ENCODE measurements at regions of chr17 and their contacts with region 1.

Region 1: DNA sequence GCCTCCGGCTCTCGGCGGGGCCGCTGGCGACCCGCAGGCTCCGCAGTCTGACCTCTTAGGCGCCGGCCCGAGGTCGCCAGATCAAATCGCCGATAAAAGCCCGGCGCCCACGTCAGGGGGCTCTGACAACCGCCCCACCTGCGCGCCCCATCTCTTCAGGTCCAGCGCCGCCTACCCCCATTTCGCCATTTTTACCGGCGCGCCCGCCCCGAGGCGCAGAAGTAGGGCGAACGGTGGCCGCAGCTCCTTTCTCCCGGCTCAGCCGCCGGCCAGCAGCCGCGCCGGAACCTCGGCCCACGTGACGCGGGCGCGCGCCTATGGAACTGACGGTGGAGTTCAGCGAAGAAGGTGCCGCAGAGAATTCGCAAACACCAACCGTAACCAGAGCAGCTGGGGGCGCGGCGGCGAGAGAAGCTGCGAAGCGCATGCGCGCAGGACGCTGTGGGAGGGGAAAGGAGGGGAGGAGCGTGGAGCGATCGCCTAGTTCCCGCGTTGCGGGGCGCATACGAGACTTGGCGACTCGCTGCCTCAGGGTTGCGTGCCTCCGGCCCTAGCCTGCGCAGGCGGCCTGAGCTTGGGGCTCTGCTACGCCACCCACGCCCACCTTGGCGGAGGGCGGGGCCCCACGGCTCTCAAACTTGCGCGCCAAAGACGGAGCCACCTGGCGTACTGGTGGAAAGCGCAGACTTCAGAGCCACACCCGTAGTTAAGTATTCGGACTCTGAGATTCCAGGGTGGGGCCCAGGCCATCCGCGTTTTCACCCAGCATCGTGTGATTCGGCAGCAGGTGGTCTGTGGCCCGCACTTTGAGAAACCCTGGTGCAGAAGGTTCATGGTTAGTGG is at the start of gene TRIM37:
- DNase-seq: peak; percentile 96 to 100 (median 99)
- ATAC-seq: peak; percentile 98
- H3K4me3 ChIP-seq: peak within 1 kb of the TSS; percentile 69
- H3K4me3 Mint-ChIP-seq: peak within 1 kb of the TSS; percentile 80 to 97 (median 94)
- H3K27ac ChIP-seq: peak within 1 kb of the TSS; percentile 83
- H3K27ac Mint-ChIP-seq: peak within 1 kb of the TSS; percentile 63 to 98 (median 90)
- H3K4me1 ChIP-seq: peaks cover 11 to 26% of the 10 kb centered on the region in 2 donors
- H3K4me1 Mint-ChIP-seq: peaks cover 15 to 57% (median 39%) of the 10 kb centered on the region in 7 donors
- H3K27me3 ChIP-seq: no peaks in the 10 kb centered on the region
- H3K27me3 Mint-ChIP-seq: no peaks in the 10 kb centered on the region
- total RNA-seq, gene TRIM37: 13.1 to 25.2 (median 22.4) TPM

Region 2: GRCh38 chr17:58337600-58338453 is 768.9 kb before region 1 on chr17:
- CTCF ChIA-PET with region 1: interaction called, 3 read pairs
- POLR2A ChIA-PET with region 1: no interaction called
- intact Hi-C with region 1: loop called in 1 of 2 experiments (anchors 10 kb)
- DNase-seq: peak; percentile 73 to 93 (median 85)
- ATAC-seq: peak; percentile 88
- H3K4me3 ChIP-seq: peak overlapping the region; percentile 98
- H3K4me3 Mint-ChIP-seq: peak overlapping the region; percentile 86 to 100 (median 97)
- H3K27ac ChIP-seq: peak overlapping the region; percentile 98
- H3K27ac Mint-ChIP-seq: peak overlapping the region; percentile 89 to 100 (median 95)
- H3K4me1 ChIP-seq: peaks cover 59 to 77% of the 10 kb centered on the region in 2 donors
- H3K4me1 Mint-ChIP-seq: peaks cover 52 to 90% (median 65%) of the 10 kb centered on the region in 7 donors
- H3K27me3 ChIP-seq: no peaks in the 10 kb centered on the region
- H3K27me3 Mint-ChIP-seq: no peaks in the 10 kb centered on the region

Region 3: GRCh38 chr17:59093702-59094231 is 12.9 kb before region 1 on chr17:
- CTCF ChIA-PET with region 1: no interaction called
- POLR2A ChIA-PET with region 1: interaction called, 12 read pairs
- intact Hi-C with region 1: no loop called
- DNase-seq: no peak
- ATAC-seq: no peak
- H3K4me3 ChIP-seq: no peak overlapping the region
- H3K4me3 Mint-ChIP-seq: no peak overlapping the region
- H3K27ac ChIP-seq: no peak overlapping the region
- H3K27ac Mint-ChIP-seq: peak overlapping the region in 1 of 9 donors; percentile 76
- H3K4me1 ChIP-seq: no peaks in the 10 kb centered on the region
- H3K4me1 Mint-ChIP-seq: peaks cover 4 to 20% (median 14%) of the 10 kb centered on the region in 7 donors
- H3K27me3 ChIP-seq: no peaks in the 10 kb centered on the region
- H3K27me3 Mint-ChIP-seq: no peaks in the 10 kb centered on the region

Region 4: GRCh38 chr17:59361916-59362810 is 255.5 kb after region 1 on chr17:
- CTCF ChIA-PET with region 1: no interaction called
- POLR2A ChIA-PET with region 1: no interaction called
- intact Hi-C with region 1: loop called in 1 of 2 experiments (anchors 1 kb)
- DNase-seq: peak in 8 of 9 donors; percentile 44 to 74 (median 64)
- ATAC-seq: peak; percentile 74
- H3K4me3 ChIP-seq: peak overlapping the region; percentile 43
- H3K4me3 Mint-ChIP-seq: peak overlapping the region; percentile 75 to 90 (median 80)
- H3K27ac ChIP-seq: peak overlapping the region; percentile 68
- H3K27ac Mint-ChIP-seq: peak overlapping the region; percentile 89 to 98 (median 94)
- H3K4me1 ChIP-seq: peaks cover 28 to 83% of the 10 kb centered on the region in 2 donors
- H3K4me1 Mint-ChIP-seq: peaks cover 57 to 97% (median 89%) of the 10 kb centered on the region in 7 donors
- H3K27me3 ChIP-seq: no peaks in the 10 kb centered on the region
- H3K27me3 Mint-ChIP-seq: no peaks in the 10 kb centered on the region

Region 5: DNA sequence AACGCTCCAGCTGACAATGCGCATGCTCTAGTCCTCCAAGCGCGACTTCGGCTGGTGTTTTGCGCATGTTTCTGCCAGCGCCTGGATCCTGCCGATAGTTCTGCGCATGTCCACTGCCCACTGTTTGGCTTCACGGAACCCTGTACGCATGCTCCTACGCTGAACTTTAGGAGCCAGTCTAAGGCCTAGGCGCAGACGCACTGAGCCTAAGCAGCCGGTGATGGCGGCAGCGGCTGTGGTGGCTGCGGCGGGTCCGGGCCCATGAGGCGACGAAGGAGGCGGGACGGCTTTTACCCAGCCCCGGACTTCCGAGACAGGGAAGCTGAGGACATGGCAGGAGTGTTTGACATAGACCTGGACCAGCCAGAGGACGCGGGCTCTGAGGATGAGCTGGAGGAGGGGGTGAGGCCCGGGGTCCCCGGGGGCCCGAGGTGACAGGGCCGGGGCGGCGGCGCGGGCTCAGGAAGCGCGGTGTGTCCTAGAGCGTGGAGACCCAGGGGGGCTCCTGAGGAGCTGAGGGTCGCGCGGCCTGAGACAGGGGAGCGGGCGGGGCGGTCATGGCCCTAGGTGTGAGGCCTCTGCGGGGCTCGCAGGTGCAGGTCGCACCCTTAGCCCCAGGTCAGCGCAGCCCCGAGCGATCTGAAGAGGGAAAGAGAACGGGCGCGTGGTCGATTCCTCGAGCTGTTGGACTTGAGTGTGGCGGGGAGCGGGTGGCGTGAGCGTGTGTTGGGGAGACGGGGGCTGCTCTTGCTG is 786.4 kb after region 1 on chr17 and contains the starts of genes RPS6KB1 and TUBD1:
- CTCF ChIA-PET with region 1: no interaction called
- POLR2A ChIA-PET with region 1: no interaction called
- intact Hi-C with region 1: loop called in 1 of 2 experiments (anchors 2 kb)
- DNase-seq: peak; percentile 87 to 99 (median 98)
- ATAC-seq: peak; percentile 96
- H3K4me3 ChIP-seq: peak within 1 kb of the TSS; percentile 74
- H3K4me3 Mint-ChIP-seq: peak within 1 kb of the TSS; percentile 97 to 100 (median 99)
- H3K27ac ChIP-seq: peak within 1 kb of the TSS; percentile 93
- H3K27ac Mint-ChIP-seq: peak within 1 kb of the TSS; percentile 98 to 100 (median 100)
- H3K4me1 ChIP-seq: peaks cover 13 to 23% of the 10 kb centered on the region in 2 donors
- H3K4me1 Mint-ChIP-seq: peaks cover 43 to 83% (median 67%) of the 10 kb centered on the region in 7 donors
- H3K27me3 ChIP-seq: no peaks in the 10 kb centered on the region
- H3K27me3 Mint-ChIP-seq: peaks cover 0 to 4% (median 0%) of the 10 kb centered on the region in 5 donors
- total RNA-seq, gene RPS6KB1: 62.0 to 107 (median 71.5) TPM
- total RNA-seq, gene TUBD1: 8.2 to 42.1 (median 14.3) TPM

Region 6: GRCh38 chr17:60599620-60600489 is 1493.2 kb after region 1 on chr17 and contains the start of gene PPM1D:
- CTCF ChIA-PET with region 1: no interaction called
- POLR2A ChIA-PET with region 1: no interaction called
- intact Hi-C with region 1: loop called (anchors 5 kb)
- DNase-seq: peak; percentile 92 to 97 (median 95)
- ATAC-seq: peak; percentile 97
- H3K4me3 ChIP-seq: peak within 1 kb of the TSS; percentile 70
- H3K4me3 Mint-ChIP-seq: peak within 1 kb of the TSS; percentile 93 to 99 (median 97)
- H3K27ac ChIP-seq: peak within 1 kb of the TSS; percentile 88
- H3K27ac Mint-ChIP-seq: peak within 1 kb of the TSS; percentile 91 to 99 (median 95)
- H3K4me1 ChIP-seq: peaks cover 0 to 13% of the 10 kb centered on the region in 2 donors
- H3K4me1 Mint-ChIP-seq: peaks cover 33 to 55% (median 43%) of the 10 kb centered on the region in 7 donors
- H3K27me3 ChIP-seq: no peaks in the 10 kb centered on the region
- H3K27me3 Mint-ChIP-seq: no peaks in the 10 kb centered on the region
- total RNA-seq, gene PPM1D: 13.5 to 18.8 (median 17.7) TPM